Activated CD4-positive, alpha-beta T cell treated with anti-CD3 and anti-CD28 coated beads for 36 hours (primary cell): ENCODE measurements at regions of chr3 and their contacts with region 1.

Region 1: GRCh38 chr3:50088725-50089608 is at the start of gene RBM5:
- DNase-seq: peak; percentile 97
- ATAC-seq: peak; percentile 100
- H3K4me3 Mint-ChIP-seq: peak within 1 kb of the TSS; percentile 99
- H3K27ac Mint-ChIP-seq: peak within 1 kb of the TSS; percentile 97
- H3K4me1 Mint-ChIP-seq: peaks cover 28% of the 10 kb centered on the region
- H3K27me3 Mint-ChIP-seq: no peaks in the 10 kb centered on the region
- total RNA-seq, gene RBM5: 118 to 131 TPM

Region 2: DNA sequence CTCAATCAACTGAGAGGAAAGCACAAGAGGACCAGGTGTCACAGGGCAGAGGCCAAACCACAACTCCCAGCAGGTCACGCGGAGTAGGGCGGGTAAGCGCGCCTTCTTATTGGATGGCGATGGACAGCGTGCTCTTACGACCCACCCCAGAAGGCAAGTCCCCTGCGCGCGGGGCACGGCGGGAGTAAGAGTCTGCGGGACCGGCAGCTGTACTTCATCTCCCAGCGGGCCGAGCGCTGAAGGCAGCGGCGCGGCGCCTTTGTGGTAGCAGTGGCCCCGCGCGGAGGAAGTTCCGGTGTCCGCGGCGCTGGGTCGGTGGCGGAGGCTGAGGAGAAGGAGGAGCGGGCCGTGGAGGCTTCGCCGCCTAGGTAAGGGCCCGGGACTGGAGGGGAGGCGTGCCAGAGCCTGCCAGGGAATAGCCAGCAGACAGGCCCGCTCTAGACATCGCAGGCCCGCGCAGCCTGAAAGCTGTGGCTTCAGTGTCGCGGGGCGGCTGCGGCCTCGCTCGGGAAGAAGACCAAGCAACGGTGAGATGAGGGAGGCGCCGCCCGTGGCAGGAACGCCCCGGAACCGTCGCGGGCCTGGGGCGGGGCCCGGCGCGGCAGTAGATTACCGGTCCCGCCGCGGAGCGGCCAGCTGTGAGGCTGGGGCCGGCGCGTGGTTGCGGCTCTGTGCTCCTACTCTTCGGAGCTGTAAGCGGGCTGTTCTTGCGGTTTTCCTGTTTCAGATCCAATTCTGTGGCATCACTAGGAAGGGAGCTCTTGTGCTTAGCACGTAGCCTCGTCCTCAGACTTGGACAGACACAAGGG is 148.9 kb before region 1 on chr3 and contains the start of gene RBM6:
- CTCF ChIA-PET with region 1: no interaction called
- POLR2A ChIA-PET with region 1: no interaction called
- intact Hi-C with region 1: loop called (anchors 1 to 5 kb)
- DNase-seq: peak; percentile 98
- ATAC-seq: peak; percentile 99
- H3K4me3 Mint-ChIP-seq: peak within 1 kb of the TSS; percentile 98
- H3K27ac Mint-ChIP-seq: peak within 1 kb of the TSS; percentile 91
- H3K4me1 Mint-ChIP-seq: peaks cover 20% of the 10 kb centered on the region
- H3K27me3 Mint-ChIP-seq: no peaks in the 10 kb centered on the region
- total RNA-seq, gene RBM6: 69.3 to 75.1 TPM

Region 3: DNA sequence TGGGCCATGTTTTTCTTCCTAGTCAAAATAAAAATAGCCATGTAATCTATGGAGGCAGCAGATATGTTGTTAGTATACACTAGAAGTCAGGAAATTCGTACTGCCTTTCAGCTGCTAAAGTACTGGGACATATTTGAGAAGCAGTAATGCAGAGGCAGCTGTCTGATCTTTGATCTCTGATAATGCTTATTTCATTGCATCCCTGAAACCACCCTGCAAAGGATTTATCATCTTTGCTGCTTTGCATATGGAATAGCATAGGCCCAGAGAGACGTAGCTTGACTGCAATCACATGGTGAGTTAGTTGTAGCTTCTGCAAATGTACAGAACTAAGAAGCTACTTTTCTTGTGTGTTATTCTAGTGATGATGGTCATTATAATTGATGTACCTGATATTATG is 96.6 kb before region 1 on chr3:
- CTCF ChIA-PET with region 1: no interaction called
- POLR2A ChIA-PET with region 1: no interaction called
- intact Hi-C with region 1: no loop called
- DNase-seq: no peak
- ATAC-seq: no peak
- H3K4me3 Mint-ChIP-seq: no peak overlapping the region
- H3K27ac Mint-ChIP-seq: no peak overlapping the region
- H3K4me1 Mint-ChIP-seq: peaks cover 2% of the 10 kb centered on the region
- H3K27me3 Mint-ChIP-seq: no peaks in the 10 kb centered on the region

Region 4: DNA sequence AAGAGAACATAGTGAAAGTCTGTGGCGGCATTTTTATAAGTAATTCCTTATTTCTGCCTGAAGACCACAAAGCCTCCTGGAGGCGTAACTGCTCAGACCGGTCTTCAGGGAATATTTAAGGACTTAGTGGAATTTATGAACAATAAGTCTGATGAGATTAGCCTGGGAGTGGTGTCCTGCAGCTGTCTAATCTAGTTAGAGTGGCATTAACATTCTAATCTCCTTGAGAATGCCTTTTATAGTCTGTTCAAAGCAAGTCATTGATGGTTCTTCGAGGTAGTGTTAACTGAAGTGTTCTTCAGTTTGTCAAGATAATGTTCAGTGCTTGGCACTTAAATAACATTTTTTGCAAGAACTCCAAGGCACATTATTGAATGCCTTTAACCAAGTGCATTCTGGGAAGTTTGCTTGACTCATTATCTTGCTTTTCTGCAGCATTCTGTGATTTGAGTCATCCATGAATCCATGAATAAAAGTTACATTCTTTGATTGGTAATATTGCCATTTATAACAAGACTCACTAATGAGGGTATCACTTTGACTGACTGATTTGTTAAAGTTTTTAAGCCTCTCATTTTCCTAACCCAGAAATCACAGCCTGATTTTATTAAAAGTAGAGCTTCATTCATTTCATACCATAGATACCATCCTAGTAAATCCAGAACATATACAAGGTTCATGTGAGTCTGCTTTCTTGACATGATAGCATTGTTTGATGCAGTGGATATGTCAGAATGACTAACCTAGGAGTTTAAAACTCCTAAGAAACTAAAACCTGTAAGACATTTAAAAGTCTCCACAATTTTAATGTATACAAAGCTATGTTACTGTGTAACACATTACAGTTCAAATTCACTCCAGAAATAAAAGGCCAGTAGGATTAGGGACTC is 12.2 kb after region 1 on chr3:
- CTCF ChIA-PET with region 1: interaction called, 11 read pairs
- POLR2A ChIA-PET with region 1: interaction called, 3 read pairs
- intact Hi-C with region 1: no loop called
- DNase-seq: no peak
- ATAC-seq: peak; percentile 68
- H3K4me3 Mint-ChIP-seq: no peak overlapping the region
- H3K27ac Mint-ChIP-seq: peak overlapping the region; percentile 38
- H3K4me1 Mint-ChIP-seq: peaks cover 16% of the 10 kb centered on the region
- H3K27me3 Mint-ChIP-seq: no peaks in the 10 kb centered on the region